ENCODE measurements at regions of chr1 and their contacts with region 1.

Region 1: GRCh38 chr1:16946646-16947045 is 24.9 kb downstream of the CROCC start:
- DNase-seq: peak in 1 of 2 donors; percentile 58
- ATAC-seq: no peak
- H3K4me3 ChIP-seq: no peak overlapping the region
- H3K27ac ChIP-seq: no peak overlapping the region
- H3K4me1 ChIP-seq: no peaks in the 10 kb centered on the region
- H3K27me3 ChIP-seq: no peaks in the 10 kb centered on the region
- CTCF ChIP-seq: no peak

Region 2: DNA sequence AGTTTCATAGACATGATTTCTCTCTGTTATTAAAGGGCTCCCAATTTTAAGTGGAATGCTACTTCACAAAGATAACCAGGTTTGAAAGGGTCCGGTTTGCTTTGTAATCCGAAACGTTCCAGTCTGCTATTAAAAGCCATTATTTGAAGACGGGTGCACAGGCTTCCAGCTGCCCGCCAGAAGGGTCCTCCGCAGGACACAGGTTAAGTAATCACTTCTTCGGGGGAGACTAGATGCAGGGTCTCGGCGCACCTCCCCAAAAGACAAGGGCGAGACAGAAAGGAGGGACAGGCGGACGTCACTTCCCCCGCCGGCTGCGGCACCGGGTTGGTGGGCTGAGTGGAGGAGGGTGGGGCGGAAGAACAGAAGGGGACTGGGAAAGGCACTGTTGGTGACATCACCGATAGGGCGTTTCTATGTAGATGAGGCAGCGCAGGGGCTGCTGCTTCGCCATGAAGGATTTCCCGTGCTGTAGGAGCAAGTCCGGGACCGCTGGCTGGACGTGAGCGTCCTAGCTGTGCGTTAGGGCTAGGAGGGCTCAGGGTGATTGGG is 42.0 kb before region 1 on chr1:
- intact Hi-C with region 1: no loop called
- DNase-seq: peak; percentile 99
- ATAC-seq: peak; percentile 97 to 99 (median 98)
- H3K4me3 ChIP-seq: peak overlapping the region; percentile 81
- H3K27ac ChIP-seq: peak overlapping the region; percentile 100
- H3K4me1 ChIP-seq: peaks cover 10% of the 10 kb centered on the region
- H3K27me3 ChIP-seq: no peaks in the 10 kb centered on the region
- CTCF ChIP-seq: no peak

Region 3: DNA sequence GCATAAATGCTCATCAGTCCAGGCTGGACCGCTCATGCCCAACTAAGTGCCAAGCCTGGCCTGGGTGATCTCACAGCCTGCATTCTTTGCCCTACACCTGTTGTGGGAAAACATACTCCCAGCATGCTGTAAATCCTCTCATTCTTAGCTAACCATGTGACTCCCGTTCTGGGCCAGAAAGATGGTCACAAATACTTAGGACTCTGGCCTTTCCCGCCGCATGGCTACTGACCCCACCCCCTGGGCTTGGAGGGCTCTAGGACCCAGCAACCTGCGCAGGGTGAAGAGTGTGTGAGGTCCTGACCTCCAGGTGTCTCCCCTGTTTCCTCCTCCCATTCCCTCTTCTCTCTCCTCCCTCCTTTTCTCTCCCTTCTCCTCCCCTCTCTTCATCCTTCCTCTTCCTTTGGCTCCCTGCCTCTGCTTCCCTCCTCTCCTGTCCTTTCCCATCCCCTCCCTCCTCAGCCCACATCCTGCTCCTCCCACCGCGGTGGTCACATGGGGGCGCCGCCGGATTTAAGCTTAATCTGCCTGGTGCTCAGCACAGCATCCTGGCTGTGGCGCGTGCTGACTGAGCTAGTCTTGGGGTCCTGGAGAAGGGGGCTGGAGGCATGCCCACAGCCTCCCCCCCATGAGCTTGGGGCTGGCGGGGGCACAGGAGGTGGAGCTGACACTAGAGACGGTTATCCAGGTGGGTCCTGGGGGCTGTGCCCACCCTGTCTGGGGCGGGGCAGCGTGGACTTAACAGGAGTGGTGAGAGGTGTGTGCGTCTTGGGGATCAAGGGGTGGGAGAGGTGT is 25.1 kb before region 1 on chr1 and contains the start of gene CROCC:
- intact Hi-C with region 1: loop called in 1 of 2 experiments (anchors 2 kb)
- DNase-seq: peak; percentile 22 to 68
- ATAC-seq: peak in 1 of 4 donors; percentile 46
- H3K4me3 ChIP-seq: no peak within 1 kb of the TSS
- H3K27ac ChIP-seq: no peak within 1 kb of the TSS
- H3K4me1 ChIP-seq: peaks cover 7% of the 10 kb centered on the region
- H3K27me3 ChIP-seq: no peaks in the 10 kb centered on the region
- CTCF ChIP-seq: no peak
- total RNA-seq, gene CROCC: 3.1 to 6.4 (median 4.3) TPM

Region 4: DNA sequence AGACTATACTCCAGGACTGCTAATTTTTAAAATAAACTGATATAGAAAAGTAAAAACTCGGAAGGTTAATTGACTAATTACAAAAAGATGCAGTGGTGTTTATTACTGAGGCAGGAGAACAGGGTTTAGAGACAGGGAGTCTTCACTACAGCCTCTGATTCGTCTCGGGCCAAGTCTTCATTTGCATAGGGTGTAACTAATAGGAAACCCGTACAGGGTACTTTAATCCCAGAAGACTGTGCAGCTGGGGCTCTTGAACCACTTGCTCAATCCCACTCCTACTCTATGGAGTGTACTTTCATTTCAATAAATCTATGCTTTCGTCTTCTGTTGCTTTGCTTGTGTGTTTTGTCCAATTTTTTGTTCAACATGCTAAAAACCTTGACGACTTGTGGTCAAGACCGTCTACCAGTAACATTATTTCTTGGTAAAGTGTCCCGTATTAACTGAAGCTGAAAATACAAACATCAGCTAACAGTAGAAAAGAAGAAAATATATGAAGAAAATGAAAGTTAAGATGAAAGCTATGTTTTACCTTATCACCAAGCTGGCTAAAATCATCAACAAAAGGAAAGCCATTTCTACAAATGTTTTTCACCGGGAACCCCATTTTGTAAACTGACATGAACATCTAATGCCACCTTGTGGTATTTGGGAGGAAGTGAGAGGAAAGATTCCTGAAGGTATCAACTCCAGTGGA is 99.1 kb after region 1 on chr1:
- intact Hi-C with region 1: loop called (anchors 1 to 2 kb)
- DNase-seq: no peak
- ATAC-seq: peak; percentile 52 to 74 (median 59)
- H3K4me3 ChIP-seq: peak overlapping the region; percentile 31
- H3K27ac ChIP-seq: no peak overlapping the region
- H3K4me1 ChIP-seq: peaks cover 14% of the 10 kb centered on the region
- H3K27me3 ChIP-seq: no peaks in the 10 kb centered on the region
- CTCF ChIP-seq: peak; percentile 78